ENCODE measurements at regions of chr17 and their contacts with region 1.

Region 1: GRCh38 chr17:37358830-37359681 is 16.7 kb upstream of the C17orf78 start:
- DNase-seq: peak; percentile 86
- ATAC-seq: peak; percentile 95
- H3K4me3 ChIP-seq: peak overlapping the region; percentile 93 to 96
- H3K27ac ChIP-seq: peak overlapping the region; percentile 86
- H3K4me1 ChIP-seq: peaks cover 29 to 32% of the 10 kb centered on the region in 2 experiments
- H3K27me3 ChIP-seq: no peaks in the 10 kb centered on the region
- CTCF ChIP-seq: no peak
- POLR2A ChIP-seq: peak; percentile 25
- RAD21 ChIP-seq: no peak

Region 2: GRCh38 chr17:37399404-37399803 is 40.3 kb after region 1 on chr17:
- CTCF ChIA-PET with region 1: interaction called, 3 read pairs
- POLR2A ChIA-PET with region 1: no interaction called
- RAD21 ChIA-PET with region 1: no interaction called
- intact Hi-C with region 1: loop called (anchors 5 kb)
- DNase-seq: no peak
- ATAC-seq: 0 out of 2 replicates have a peak, but pooled peaks have one; percentile 35
- H3K4me3 ChIP-seq: no peak overlapping the region
- H3K27ac ChIP-seq: no peak overlapping the region
- H3K4me1 ChIP-seq: peaks cover 6 to 18% of the 10 kb centered on the region in 2 experiments
- H3K27me3 ChIP-seq: no peaks in the 10 kb centered on the region
- CTCF ChIP-seq: no peak
- POLR2A ChIP-seq: no peak
- RAD21 ChIP-seq: no peak

Measured in HCT116 (cell line).